Natural killer cell (primary cell): ENCODE measurements at regions of chr6 and their contacts with region 1.

Region 1: GRCh38 chr6:31580807-31581433 is 1.3 kb downstream of the LTB start:
- DNase-seq: peak; percentile 92 to 93
- ATAC-seq: peak; percentile 85 to 96 (median 87)
- H3K4me3 ChIP-seq: peak overlapping the region; percentile 98
- H3K4me3 Mint-ChIP-seq: peak overlapping the region; percentile 98
- H3K27ac ChIP-seq: peak overlapping the region; percentile 87
- H3K27ac Mint-ChIP-seq: peak overlapping the region; percentile 95 to 100
- H3K4me1 ChIP-seq: peaks cover 89% of the 10 kb centered on the region
- H3K4me1 Mint-ChIP-seq: peaks cover 74 to 75% of the 10 kb centered on the region in 2 donors
- H3K27me3 ChIP-seq: no peaks in the 10 kb centered on the region
- H3K27me3 Mint-ChIP-seq: no peaks in the 10 kb centered on the region
- CTCF ChIP-seq: peak; percentile 99

Region 2: GRCh38 chr6:31546962-31547726 is 33.8 kb before region 1 on chr6 and contains the start of gene NFKBIL1:
- intact Hi-C with region 1: loop called (anchors 1 kb)
- DNase-seq: peak; percentile 76 to 96
- ATAC-seq: peak; percentile 89 to 96 (median 91)
- H3K4me3 ChIP-seq: peak within 1 kb of the TSS; percentile 38
- H3K4me3 Mint-ChIP-seq: peak within 1 kb of the TSS; percentile 95
- H3K27ac ChIP-seq: peak within 1 kb of the TSS; percentile 87
- H3K27ac Mint-ChIP-seq: peak within 1 kb of the TSS; percentile 90 to 97
- H3K4me1 ChIP-seq: peaks cover 40% of the 10 kb centered on the region
- H3K4me1 Mint-ChIP-seq: peaks cover 32 to 41% of the 10 kb centered on the region in 2 donors
- H3K27me3 ChIP-seq: no peaks in the 10 kb centered on the region
- H3K27me3 Mint-ChIP-seq: no peaks in the 10 kb centered on the region
- CTCF ChIP-seq: peak; percentile 31
- total RNA-seq, gene NFKBIL1: 8.1 to 10.9 (median 10.7) TPM

Region 3: DNA sequence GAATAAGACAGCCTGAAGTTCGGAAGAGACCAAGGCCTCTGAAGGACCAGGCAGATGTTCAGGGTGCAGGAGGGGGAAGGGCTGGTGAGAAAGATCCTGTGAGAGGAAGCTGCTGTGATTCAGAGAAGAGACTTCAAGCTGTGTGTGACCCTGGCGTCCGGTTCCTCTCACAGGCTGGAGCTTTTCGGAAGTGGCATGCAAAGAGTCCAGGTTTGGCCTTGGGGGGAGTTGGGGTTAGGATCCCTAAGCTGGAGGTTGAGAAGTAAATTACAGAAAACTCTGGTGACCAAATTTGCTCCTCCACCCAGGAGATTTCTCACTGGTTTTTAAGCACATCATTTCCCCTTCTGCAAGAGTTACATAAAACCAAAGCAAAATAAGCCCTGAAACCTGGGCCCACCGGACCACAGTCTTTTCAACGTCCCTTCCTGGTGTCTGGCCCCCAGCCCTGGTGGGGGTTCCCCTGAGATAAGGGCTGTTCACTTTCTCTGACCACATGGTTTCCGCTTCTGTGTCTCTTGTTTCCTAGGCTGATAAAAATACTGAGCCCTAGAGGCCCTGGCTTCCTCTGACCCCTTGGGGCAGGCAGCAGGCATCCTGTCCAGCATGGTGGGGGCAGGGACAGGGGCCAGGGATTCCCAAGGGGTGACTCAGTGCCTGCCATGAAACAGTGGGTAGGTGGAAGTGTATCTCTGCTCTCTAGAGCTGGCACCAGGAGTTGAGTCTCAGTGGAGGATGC is 20.8 kb before region 1 on chr6:
- intact Hi-C with region 1: loop called (anchors 2 kb)
- DNase-seq: peak; percentile 66 to 75
- ATAC-seq: peak; percentile 74 to 84 (median 76)
- H3K4me3 ChIP-seq: peak overlapping the region; percentile 0
- H3K4me3 Mint-ChIP-seq: peak overlapping the region; percentile 82
- H3K27ac ChIP-seq: peak overlapping the region; percentile 90
- H3K27ac Mint-ChIP-seq: peak overlapping the region; percentile 98
- H3K4me1 ChIP-seq: peaks cover 69% of the 10 kb centered on the region
- H3K4me1 Mint-ChIP-seq: peaks cover 47 to 66% of the 10 kb centered on the region in 2 donors
- H3K27me3 ChIP-seq: no peaks in the 10 kb centered on the region
- H3K27me3 Mint-ChIP-seq: no peaks in the 10 kb centered on the region
- CTCF ChIP-seq: no peak

Region 4: GRCh38 chr6:31597006-31597405 is 16.1 kb after region 1 on chr6:
- intact Hi-C with region 1: loop called (anchors 1 kb)
- DNase-seq: peak in 1 of 2 donors; percentile 86
- ATAC-seq: peak; percentile 57 to 73 (median 58)
- H3K4me3 ChIP-seq: no peak overlapping the region
- H3K4me3 Mint-ChIP-seq: peak overlapping the region; percentile 60
- H3K27ac ChIP-seq: no peak overlapping the region
- H3K27ac Mint-ChIP-seq: peak overlapping the region; percentile 58 to 82
- H3K4me1 ChIP-seq: peaks cover 54% of the 10 kb centered on the region
- H3K4me1 Mint-ChIP-seq: peaks cover 23 to 44% of the 10 kb centered on the region in 2 donors
- H3K27me3 ChIP-seq: no peaks in the 10 kb centered on the region
- H3K27me3 Mint-ChIP-seq: no peaks in the 10 kb centered on the region
- CTCF ChIP-seq: peak; percentile 75